Ovary (tissue), 10 donors: ENCODE measurements at regions of chr4 and their contacts with region 1.

Region 1: GRCh38 chr4:145732895-145733880 is 53.2 kb downstream of the C4orf51 start:
- DNase-seq: peak; percentile 94 to 96 (median 96)
- H3K4me3 ChIP-seq: peak overlapping the region; percentile 57
- H3K27ac ChIP-seq: peak overlapping the region; percentile 81 to 98
- H3K4me1 ChIP-seq: peaks cover 5% of the 10 kb centered on the region
- H3K27me3 ChIP-seq: no peaks in the 10 kb centered on the region
- CTCF ChIP-seq: peak in 2 of 3 donors; percentile 22 to 29
- EP300 ChIP-seq: no peak
- POLR2A ChIP-seq: peak; percentile 85

Region 2: DNA sequence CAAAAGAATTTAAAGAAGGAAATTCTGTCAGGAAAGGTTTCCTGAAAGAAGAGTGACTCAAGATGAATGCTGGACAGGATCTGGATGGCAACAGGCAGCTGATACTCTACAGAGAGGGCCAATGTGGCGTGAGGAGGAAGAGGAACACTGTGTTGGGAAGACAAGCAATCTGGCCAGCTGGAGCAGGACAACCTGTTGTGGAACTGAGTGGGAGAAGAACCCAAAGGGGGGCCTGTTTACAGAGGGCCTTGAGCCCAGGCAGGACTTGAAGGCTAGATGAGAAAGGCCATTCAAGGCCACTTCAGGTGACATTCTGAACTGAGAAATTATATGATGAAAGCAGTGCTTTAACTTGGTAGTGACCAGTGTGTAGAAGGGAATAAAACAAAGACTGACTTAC is 561.3 kb before region 1 on chr4:
- intact Hi-C with region 1: loop called in 1 of 4 experiments (anchors 5 kb)
- DNase-seq: no peak
- H3K4me3 ChIP-seq: no peak overlapping the region
- H3K27ac ChIP-seq: no peak overlapping the region
- H3K4me1 ChIP-seq: peaks cover 5% of the 10 kb centered on the region
- H3K27me3 ChIP-seq: no peaks in the 10 kb centered on the region
- CTCF ChIP-seq: no peak
- EP300 ChIP-seq: no peak
- POLR2A ChIP-seq: no peak

Region 3: DNA sequence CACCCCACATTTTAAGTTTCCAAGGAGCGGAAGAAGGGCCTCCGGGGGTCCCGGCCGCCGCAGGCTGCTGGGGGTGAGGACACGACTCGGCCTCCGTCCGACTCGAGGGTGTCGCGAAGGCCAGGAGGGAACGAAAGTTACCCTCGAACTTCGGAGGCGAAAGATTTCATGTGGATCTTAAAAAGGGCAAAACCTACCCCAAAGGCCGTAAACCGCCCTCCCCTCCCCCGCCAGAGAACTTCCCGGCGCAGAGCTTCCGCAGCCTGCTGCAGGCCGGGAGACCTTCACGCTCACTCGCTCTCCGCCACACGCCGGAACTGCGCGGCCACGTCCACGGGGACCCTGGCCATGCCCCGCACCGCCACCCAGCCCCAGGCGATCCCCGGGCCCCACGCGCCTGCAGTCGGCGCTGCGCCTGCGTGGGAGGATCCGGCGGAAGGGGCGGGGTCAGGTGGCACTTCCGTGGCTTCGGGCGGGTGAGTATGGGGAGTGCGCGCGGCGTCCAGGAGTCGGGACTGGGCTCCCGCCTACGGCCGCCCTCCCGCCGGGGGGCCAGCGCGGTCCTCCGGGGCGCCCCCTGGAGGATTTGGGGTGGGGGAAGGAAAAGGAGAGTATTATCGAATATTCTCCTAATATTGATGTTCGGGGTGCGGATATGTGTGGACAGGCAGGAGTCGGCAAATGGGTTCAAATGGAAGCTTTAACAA is 114.1 kb before region 1 on chr4 and contains the start of gene MMAA:
- intact Hi-C with region 1: loop called in 1 of 4 experiments (anchors 5 kb)
- DNase-seq: peak; percentile 95 to 97 (median 97)
- H3K4me3 ChIP-seq: peak within 1 kb of the TSS; percentile 80
- H3K27ac ChIP-seq: peak within 1 kb of the TSS; percentile 64 to 91
- H3K4me1 ChIP-seq: peaks cover 3% of the 10 kb centered on the region
- H3K27me3 ChIP-seq: no peaks in the 10 kb centered on the region
- CTCF ChIP-seq: peak; percentile 75 to 90 (median 78)
- EP300 ChIP-seq: no peak
- POLR2A ChIP-seq: peak; percentile 91
- total RNA-seq, gene MMAA: 2.1 to 8.6 (median 6.2) TPM